ENCODE measurements at regions of chr14 and their contacts with region 1.

Region 1: DNA sequence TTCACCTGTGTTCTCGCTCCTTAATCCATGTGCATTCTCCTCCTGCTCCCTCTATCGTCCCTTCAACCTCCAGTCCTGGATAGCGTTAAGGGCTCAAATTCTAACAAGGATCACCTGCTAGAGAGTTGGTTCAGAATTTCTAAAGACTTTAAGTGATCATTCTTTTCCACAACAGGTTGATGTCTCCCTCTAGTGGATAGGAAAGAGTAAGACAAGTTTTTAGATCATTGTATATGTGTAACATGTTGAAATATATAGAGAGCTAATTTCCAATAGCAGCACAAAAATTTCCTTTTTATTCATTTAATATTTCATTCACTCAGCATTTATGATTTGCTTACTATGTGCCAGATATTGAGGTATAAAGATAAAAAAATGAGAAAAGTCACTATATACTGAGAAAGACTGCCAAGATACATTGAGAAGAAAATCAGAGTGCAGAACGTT is 9.3 kb upstream of the ESR2 start:
- DNase-seq: peak in 1 of 2 experiments; percentile 36
- H3K4me3 ChIP-seq: no peak overlapping the region
- H3K27ac ChIP-seq: no peak overlapping the region
- H3K4me1 ChIP-seq: no peaks in the 10 kb centered on the region
- H3K27me3 ChIP-seq: no peaks in the 10 kb centered on the region
- CTCF ChIP-seq: peak in 2 of 3 experiments; percentile 49 to 73; a peak in 3 of 4 replicates
- EP300 ChIP-seq: no peak
- POLR2A ChIP-seq: no peak
- RAD21 ChIP-seq: peak; percentile 81 to 86

Region 2: GRCh38 chr14:64137657-64138290 is 165.7 kb before region 1 on chr14:
- CTCF ChIA-PET with region 1: interaction called, 31 read pairs
- POLR2A ChIA-PET with region 1: no interaction called
- DNase-seq: no peak
- H3K4me3 ChIP-seq: no peak overlapping the region
- H3K27ac ChIP-seq: no peak overlapping the region
- H3K4me1 ChIP-seq: no peaks in the 10 kb centered on the region; a peak in 1 of 7 replicates
- H3K27me3 ChIP-seq: no peaks in the 10 kb centered on the region
- CTCF ChIP-seq: peak; percentile 10 to 52 (median 39)
- EP300 ChIP-seq: no peak
- POLR2A ChIP-seq: no peak
- RAD21 ChIP-seq: peak; percentile 67 to 69

Region 3: GRCh38 chr14:64159588-64159987 is 143.9 kb before region 1 on chr14:
- CTCF ChIA-PET with region 1: interaction called, 11 read pairs
- POLR2A ChIA-PET with region 1: no interaction called
- DNase-seq: no peak
- H3K4me3 ChIP-seq: no peak overlapping the region
- H3K27ac ChIP-seq: no peak overlapping the region
- H3K4me1 ChIP-seq: no peaks in the 10 kb centered on the region
- H3K27me3 ChIP-seq: no peaks in the 10 kb centered on the region
- CTCF ChIP-seq: peak in 2 of 3 experiments; percentile 22 to 31; a peak in 2 of 4 replicates
- EP300 ChIP-seq: no peak
- POLR2A ChIP-seq: no peak
- RAD21 ChIP-seq: peak; percentile 49 to 62

Region 4: DNA sequence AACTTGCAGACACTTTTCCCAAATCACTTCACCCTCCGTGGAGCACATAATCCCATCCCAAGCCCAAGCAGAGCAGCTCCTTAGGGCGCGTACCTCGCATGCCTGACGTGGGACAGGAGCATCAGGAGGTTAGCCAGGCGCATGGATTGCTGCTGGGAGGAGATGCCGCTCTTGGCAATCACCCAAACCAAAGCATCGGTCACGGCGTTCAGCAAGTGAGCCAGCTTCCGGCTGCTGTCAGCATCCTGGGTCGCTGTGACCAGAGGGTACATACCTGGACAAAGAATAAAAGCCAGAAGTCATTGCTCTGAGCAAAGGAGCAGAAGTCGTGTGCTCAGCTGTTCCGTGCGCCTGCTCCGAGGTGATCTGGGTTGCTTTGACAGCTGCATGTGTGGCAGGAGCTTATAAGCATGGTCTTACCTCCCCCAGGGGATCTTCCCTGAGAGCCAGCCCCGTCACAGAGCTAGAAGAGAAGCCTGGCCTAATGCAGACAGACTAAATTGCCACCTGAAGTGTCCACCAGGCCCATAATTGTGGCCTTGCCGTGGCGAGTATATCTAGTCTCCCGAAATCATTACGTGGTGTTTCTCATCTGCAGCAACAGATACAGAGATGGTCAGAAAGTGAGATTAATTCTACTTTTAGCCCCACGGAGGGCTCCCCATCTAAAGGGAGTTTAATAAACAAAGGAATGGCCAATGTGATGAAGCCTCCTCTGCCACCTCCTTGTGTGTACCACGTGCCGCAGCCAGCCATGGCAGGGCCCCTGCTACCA is 68.4 kb before region 1 on chr14:
- CTCF ChIA-PET with region 1: interaction called, 32 read pairs
- POLR2A ChIA-PET with region 1: interaction called, 5 read pairs
- DNase-seq: no peak
- H3K4me3 ChIP-seq: no peak overlapping the region
- H3K27ac ChIP-seq: no peak overlapping the region
- H3K4me1 ChIP-seq: 0 out of 7 replicates have a peak, but pooled peaks cover 0 to 2% (median 0%) of the 10 kb centered on the region in 4 experiments
- H3K27me3 ChIP-seq: no peaks in the 10 kb centered on the region
- CTCF ChIP-seq: no peak
- EP300 ChIP-seq: no peak
- POLR2A ChIP-seq: no peak
- RAD21 ChIP-seq: no peak

Region 5: DNA sequence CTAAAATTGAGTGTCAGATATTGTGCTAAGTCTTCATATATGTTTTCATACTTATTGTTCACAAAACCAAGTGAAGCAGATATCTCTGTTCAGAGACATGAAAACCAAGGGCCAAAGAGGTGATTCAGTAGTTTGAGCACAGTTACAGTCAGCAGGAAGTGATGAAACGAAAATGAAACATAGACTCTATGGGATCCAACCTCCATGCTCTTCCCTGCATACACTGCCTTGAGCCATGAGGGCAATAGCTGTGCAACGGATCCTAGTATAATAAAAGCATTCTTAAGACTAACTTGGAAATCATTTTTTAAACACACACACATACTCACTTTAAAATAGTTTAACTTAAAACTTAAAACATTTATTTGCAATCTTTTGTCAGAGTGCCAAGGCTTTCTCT is 37.3 kb before region 1 on chr14:
- CTCF ChIA-PET with region 1: interaction called, 11 read pairs
- POLR2A ChIA-PET with region 1: no interaction called
- DNase-seq: no peak
- H3K4me3 ChIP-seq: no peak overlapping the region
- H3K27ac ChIP-seq: no peak overlapping the region
- H3K4me1 ChIP-seq: no peaks in the 10 kb centered on the region
- H3K27me3 ChIP-seq: peaks cover 0 to 1% (median 0%) of the 10 kb centered on the region in 4 experiments; a peak in 1 of 7 replicates
- CTCF ChIP-seq: no peak
- EP300 ChIP-seq: no peak
- POLR2A ChIP-seq: no peak
- RAD21 ChIP-seq: no peak

Region 6: DNA sequence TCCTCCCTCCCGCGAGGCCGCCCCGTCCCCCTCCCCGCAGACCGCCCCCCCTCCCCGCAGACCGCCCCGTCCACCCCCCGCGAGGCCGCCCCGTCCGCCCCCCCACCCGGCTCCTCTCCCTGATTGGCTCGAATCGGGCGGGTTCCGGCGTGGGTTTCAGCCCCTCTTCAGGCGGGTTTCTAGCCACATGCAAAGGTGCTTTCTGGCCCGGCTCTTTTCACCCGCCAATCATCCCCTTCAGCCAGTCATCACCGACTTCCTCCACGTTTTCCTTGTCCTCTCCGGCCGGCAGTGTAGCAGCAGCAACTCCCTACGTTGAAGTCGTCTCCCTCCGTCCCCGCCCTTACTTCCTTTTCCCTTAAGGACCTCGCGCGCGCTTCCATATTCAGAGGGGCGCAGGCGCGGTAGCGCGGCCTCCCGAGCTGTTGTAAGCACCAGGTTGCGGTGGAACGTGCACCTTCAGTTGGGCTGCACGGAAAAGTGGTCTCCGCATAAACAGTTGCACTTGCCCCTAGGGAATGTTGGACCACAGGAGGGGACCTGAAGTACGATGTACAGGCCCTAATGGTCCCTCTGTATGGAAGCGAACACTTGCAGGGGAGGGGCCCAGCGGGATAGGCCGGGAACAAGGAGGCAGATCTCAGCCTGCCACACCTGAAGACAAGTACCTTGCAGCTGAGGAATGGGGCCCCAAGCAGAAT is 35.3 kb after region 1 on chr14:
- CTCF ChIA-PET with region 1: interaction called, 13 read pairs
- POLR2A ChIA-PET with region 1: no interaction called
- DNase-seq: peak; percentile 92 to 96
- H3K4me3 ChIP-seq: peak overlapping the region; percentile 74 to 93 (median 81)
- H3K27ac ChIP-seq: peak overlapping the region; percentile 88
- H3K4me1 ChIP-seq: peaks cover 6 to 14% (median 9%) of the 10 kb centered on the region in 4 experiments; a peak in 6 of 7 replicates
- H3K27me3 ChIP-seq: no peaks in the 10 kb centered on the region
- CTCF ChIP-seq: no peak
- EP300 ChIP-seq: no peak
- POLR2A ChIP-seq: peak; percentile 44 to 85
- RAD21 ChIP-seq: no peak

Region 7: DNA sequence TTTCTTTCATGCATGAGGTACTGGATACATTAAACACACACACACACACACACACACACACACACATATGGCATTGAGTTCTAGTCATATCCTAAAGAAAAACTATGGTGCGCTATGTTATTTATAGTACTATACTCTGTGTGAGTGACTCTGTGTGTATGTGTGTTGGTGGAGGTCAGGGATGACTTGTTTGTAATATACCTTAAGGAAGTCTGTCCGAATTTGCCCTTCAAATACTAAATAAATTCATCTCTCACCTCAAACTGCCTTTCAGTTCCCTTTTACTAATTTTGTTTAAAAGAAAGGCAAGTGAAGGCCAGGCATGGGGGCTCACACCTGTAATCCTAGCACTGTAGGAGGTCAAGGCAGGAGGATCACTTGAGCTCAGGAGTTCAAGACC is 159.7 kb after region 1 on chr14:
- CTCF ChIA-PET with region 1: no interaction called
- POLR2A ChIA-PET with region 1: no interaction called
- DNase-seq: no peak
- H3K4me3 ChIP-seq: no peak overlapping the region
- H3K27ac ChIP-seq: no peak overlapping the region
- H3K4me1 ChIP-seq: peaks cover 0 to 6% (median 4%) of the 10 kb centered on the region in 4 experiments; a peak in 4 of 7 replicates
- H3K27me3 ChIP-seq: no peaks in the 10 kb centered on the region
- CTCF ChIP-seq: no peak
- EP300 ChIP-seq: no peak
- POLR2A ChIP-seq: no peak
- RAD21 ChIP-seq: no peak